ENCODE measurements at regions of chr17 and their contacts with region 1.

Region 1: GRCh38 chr17:2369551-2370210 is 31.2 kb downstream of the MNT start:
- DNase-seq: no peak
- ATAC-seq: peak; percentile 9 to 41; a peak in 3 of 6 replicates
- H3K4me3 ChIP-seq: no peak overlapping the region
- H3K27ac ChIP-seq: no peak overlapping the region
- H3K4me1 ChIP-seq: no peaks in the 10 kb centered on the region
- CTCF ChIP-seq: no peak
- EP300 ChIP-seq: no peak
- POLR2A ChIP-seq: no peak
- RAD21 ChIP-seq: peak in 1 of 2 experiments; percentile 38; a peak in 1 of 5 replicates

Region 2: DNA sequence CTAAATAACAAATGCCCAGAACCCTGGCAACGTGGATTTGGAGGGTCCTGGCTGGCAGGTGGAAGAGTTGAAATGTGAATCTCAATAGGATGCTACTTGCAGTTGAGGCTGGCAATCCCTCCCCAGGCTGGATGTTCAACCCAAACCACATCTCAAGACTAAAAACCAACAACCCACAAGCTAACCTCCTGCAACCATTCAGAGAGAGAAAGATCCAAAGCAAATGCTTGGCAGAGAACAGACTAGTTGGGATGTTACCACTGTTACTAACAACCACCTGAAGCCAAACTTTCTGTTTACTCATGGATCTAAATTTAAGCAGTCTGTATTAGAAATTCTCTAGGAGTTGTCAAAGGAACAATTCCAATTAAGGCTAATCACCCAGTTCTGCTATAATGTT is 94.0 kb before region 1 on chr17:
- CTCF ChIA-PET with region 1: no interaction called
- POLR2A ChIA-PET with region 1: no interaction called
- DNase-seq: no peak
- ATAC-seq: no peak
- H3K4me3 ChIP-seq: no peak overlapping the region
- H3K27ac ChIP-seq: no peak overlapping the region
- H3K4me1 ChIP-seq: no peaks in the 10 kb centered on the region
- CTCF ChIP-seq: no peak
- EP300 ChIP-seq: no peak
- POLR2A ChIP-seq: no peak
- RAD21 ChIP-seq: no peak

Region 3: GRCh38 chr17:2347547-2348307 is 22.0 kb before region 1 on chr17:
- CTCF ChIA-PET with region 1: interaction called, 216 read pairs
- POLR2A ChIA-PET with region 1: no interaction called
- DNase-seq: peak; percentile 47 to 84
- ATAC-seq: peak; percentile 78 to 87
- H3K4me3 ChIP-seq: no peak overlapping the region
- H3K27ac ChIP-seq: peak overlapping the region; percentile 14 to 77; a peak in 4 of 6 replicates
- H3K4me1 ChIP-seq: peaks cover 14% of the 10 kb centered on the region
- CTCF ChIP-seq: no peak
- EP300 ChIP-seq: no peak
- POLR2A ChIP-seq: no peak
- RAD21 ChIP-seq: no peak

Region 4: DNA sequence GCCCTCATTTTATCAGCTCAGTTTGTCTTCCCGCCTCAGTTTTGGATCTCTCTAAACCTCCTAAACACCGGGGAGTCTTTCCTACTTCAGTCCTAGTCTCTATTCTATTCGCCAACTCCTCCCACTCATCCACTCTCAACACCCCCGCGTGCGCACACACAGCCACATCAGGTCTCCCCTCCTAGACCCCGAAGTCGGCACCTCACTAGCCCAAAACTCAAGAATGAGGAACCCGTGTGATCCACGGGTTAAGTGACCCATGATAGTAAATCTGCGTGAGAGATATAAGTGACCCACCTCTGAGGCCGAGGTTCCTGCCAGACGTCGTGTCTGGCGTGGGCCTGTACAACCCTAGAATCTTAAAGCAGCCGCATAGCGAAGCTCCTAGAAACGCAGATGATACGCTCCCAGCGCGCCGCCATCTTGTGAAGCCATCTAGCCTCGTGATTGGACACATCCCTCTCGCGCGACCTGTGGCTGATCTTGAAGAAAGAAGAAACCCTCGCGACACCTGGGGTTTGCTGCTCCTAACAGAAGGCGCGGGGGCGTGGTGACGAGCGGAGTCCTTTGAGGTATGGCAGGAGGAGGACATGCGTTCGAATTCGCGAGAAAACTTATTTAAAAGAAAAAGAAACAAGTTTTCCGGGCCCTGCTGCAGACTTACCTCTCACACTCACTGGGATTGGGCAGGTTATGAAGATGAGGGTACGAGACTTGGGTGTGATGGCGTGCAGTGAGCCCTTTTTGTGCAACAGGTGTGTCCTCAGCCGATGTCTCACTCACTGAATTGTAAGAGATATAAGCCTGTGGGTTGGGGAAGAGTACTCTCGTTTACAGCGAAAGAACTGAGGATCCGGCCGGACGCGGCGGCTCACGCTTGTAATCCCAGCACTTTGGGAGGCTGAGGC is 142.0 kb after region 1 on chr17 and contains the start of gene METTL16:
- CTCF ChIA-PET with region 1: no interaction called
- POLR2A ChIA-PET with region 1: no interaction called
- DNase-seq: peak; percentile 99
- ATAC-seq: peak; percentile 99
- H3K4me3 ChIP-seq: peak within 1 kb of the TSS; percentile 79
- H3K27ac ChIP-seq: peak within 1 kb of the TSS; percentile 89 to 97
- H3K4me1 ChIP-seq: peaks cover 16% of the 10 kb centered on the region
- CTCF ChIP-seq: no peak
- EP300 ChIP-seq: no peak
- POLR2A ChIP-seq: peak; percentile 76
- RAD21 ChIP-seq: no peak
- polyA plus RNA-seq, gene METTL16: 58.0 and 58.4 TPM in 2 replicates